ENCODE measurements at regions of chr6 and their contacts with region 1.

Region 1: DNA sequence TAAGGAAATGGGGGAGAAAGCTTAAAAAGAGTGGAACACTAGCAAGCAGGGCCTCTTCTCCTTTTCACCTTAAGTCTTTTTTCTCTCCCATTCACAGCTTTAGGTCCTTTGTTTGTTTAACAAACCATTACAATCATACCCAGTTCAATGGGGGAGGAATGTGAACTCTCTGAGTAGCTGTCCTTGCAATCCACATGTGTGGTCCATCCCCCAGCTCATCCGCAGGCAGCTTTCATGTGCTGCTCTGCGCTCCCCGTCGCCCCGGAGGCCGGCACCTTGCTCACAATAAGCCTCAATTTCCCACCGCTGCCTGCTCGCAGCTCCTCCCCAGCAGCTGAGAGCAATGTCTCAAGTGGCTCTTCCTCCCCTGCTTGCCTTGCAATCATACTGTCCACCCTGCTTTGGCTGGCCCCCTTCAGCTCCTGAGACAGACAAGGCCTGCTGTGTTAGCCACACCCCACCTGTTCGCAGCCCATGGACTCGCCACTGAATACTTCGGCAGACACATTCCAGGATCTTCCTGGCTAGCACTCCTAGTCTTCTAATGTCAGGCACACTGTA is 49.1 kb downstream of the PLAGL1 start:
- DNase-seq: no peak
- ATAC-seq: no peak
- H3K4me3 ChIP-seq: no peak overlapping the region
- H3K27ac ChIP-seq: no peak overlapping the region
- H3K4me1 ChIP-seq: no peaks in the 10 kb centered on the region
- H3K27me3 ChIP-seq: no peaks in the 10 kb centered on the region

Region 2: DNA sequence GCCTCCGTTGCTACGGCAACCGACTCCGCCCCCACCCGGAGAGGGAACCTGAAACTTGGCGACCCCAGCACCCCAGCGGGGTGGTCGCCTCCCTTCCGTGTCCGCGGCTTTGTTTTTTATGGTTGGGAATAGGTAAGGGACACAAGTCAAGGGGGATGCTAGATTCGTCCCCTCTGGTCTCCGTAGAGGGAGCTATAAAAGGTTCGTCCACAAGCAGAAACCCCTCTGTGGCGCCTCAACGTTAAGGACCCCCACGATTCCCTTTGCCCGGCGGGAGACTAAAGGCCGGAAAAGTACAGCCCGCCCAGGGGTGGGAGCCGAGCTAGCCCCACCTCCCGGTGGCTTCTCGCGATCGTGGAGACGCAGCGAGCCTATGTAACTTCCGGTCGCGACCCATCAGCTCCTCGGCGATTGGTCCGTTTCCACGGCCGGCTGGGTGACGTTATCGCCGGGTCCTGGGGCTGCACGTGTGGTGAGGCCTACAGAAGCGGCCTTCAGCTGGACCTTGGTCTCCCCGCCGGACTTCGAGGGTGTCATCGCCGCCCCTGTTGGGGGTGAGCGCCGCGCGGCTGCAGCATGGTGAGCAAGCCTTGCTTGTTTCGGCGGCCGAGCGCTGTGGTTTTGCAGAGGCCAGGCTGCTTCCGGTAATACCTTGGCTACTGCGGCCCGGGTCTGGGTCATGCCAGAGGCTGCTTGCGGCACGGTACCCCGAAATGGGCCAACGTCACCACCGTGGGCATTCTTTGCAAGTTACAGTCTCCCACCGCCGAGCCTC is 115.8 kb before region 1 on chr6 and contains the start of gene LTV1:
- intact Hi-C with region 1: loop called in 1 of 2 experiments (anchors 5 kb)
- DNase-seq: peak; percentile 98
- ATAC-seq: peak; percentile 100
- H3K4me3 ChIP-seq: peak within 1 kb of the TSS; percentile 56 to 71
- H3K27ac ChIP-seq: peak within 1 kb of the TSS; percentile 84 to 92
- H3K4me1 ChIP-seq: peaks cover 0 to 10% of the 10 kb centered on the region in 2 donors
- H3K27me3 ChIP-seq: no peaks in the 10 kb centered on the region
- total RNA-seq, gene LTV1: 16.5 to 16.7 TPM